Activated CD4-positive, alpha-beta memory T cell treated with anti-CD3 and anti-CD28 coated beads, Interleukin-2, amount 10 ng/mL, durations not matched to agents 7 days and 5 days (primary cell): ENCODE measurements at regions of chr2 and their contacts with region 1.

Region 1: GRCh38 chr2:70142590-70143313 is 48.1 kb downstream of the C2orf42 start:
- DNase-seq: peak; percentile 100
- H3K4me3 Mint-ChIP-seq: peak overlapping the region; percentile 80
- H3K27ac Mint-ChIP-seq: peak overlapping the region; percentile 97
- H3K4me1 Mint-ChIP-seq: peaks cover 71% of the 10 kb centered on the region
- H3K27me3 Mint-ChIP-seq: no peaks in the 10 kb centered on the region

Region 2: GRCh38 chr2:69893684-69894551 is 248.8 kb before region 1 on chr2 and contains the start of gene SNRNP27:
- CTCF ChIA-PET with region 1: no interaction called
- POLR2A ChIA-PET with region 1: interaction called, 15 read pairs
- DNase-seq: peak; percentile 84
- H3K4me3 Mint-ChIP-seq: peak within 1 kb of the TSS; percentile 96
- H3K27ac Mint-ChIP-seq: peak within 1 kb of the TSS; percentile 94
- H3K4me1 Mint-ChIP-seq: peaks cover 44% of the 10 kb centered on the region
- H3K27me3 Mint-ChIP-seq: no peaks in the 10 kb centered on the region
- total RNA-seq, gene SNRNP27: 59.3 to 63.3 TPM

Region 3: DNA sequence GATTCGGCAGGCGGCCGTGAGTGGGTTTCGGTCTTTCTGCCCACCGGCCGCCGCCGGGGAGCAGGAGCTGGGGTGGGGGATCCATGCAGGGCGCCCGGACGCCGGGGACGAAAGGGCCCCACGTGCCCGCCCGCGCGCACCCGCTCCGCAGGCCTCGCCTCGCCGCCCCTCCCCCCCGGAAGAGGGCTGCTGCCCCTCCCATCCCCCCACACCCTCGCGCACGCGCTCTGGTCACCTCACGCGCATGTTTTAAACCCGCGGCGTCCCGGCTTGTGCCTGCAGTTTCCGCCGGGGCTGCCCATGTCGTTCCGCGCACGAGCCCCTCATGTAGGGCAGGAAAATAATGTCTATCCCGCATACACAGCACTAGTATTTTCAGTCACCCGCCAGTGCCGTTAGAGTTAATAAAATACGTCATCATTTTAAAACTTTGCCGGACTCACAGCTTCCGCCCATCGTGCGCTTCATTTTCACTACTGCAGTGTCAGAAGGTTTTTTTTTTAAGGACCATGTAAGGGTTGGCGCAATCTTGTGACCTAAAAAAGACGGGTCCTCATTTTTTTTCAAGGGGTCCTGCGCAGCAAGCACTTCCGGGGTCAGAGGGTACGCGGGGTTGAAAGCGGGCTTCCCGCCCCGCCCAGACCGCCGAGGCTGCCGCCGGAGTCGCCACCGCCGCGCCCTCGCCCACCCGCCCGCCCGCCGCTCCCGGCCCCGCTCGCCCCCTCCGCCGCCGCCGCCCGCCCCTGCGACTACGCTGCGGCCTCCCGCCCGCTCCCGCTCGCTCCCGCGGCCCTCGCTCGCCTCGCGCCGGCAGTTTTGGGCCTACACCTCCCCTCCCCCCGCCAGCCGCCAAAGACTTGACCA is 55.7 kb before region 1 on chr2 and contains the start of gene PCBP1:
- CTCF ChIA-PET with region 1: interaction called, 147 read pairs
- POLR2A ChIA-PET with region 1: interaction called, 856 read pairs
- DNase-seq: peak; percentile 95
- H3K4me3 Mint-ChIP-seq: peak within 1 kb of the TSS; percentile 98
- H3K27ac Mint-ChIP-seq: peak within 1 kb of the TSS; percentile 100
- H3K4me1 Mint-ChIP-seq: peaks cover 59% of the 10 kb centered on the region
- H3K27me3 Mint-ChIP-seq: no peaks in the 10 kb centered on the region
- total RNA-seq, gene PCBP1: 475 to 483 TPM

Region 4: GRCh38 chr2:70124983-70125480 is 17.7 kb before region 1 on chr2:
- CTCF ChIA-PET with region 1: interaction called, 70 read pairs
- POLR2A ChIA-PET with region 1: interaction called, 197 read pairs
- DNase-seq: peak; percentile 65
- H3K4me3 Mint-ChIP-seq: peak overlapping the region; percentile 84
- H3K27ac Mint-ChIP-seq: peak overlapping the region; percentile 99
- H3K4me1 Mint-ChIP-seq: peaks cover 71% of the 10 kb centered on the region
- H3K27me3 Mint-ChIP-seq: no peaks in the 10 kb centered on the region

Region 5: GRCh38 chr2:70190418-70191243 is 47.9 kb after region 1 on chr2 and contains the start of gene C2orf42:
- CTCF ChIA-PET with region 1: interaction called, 8 read pairs
- POLR2A ChIA-PET with region 1: interaction called, 60 read pairs
- DNase-seq: peak; percentile 96
- H3K4me3 Mint-ChIP-seq: peak within 1 kb of the TSS; percentile 82
- H3K27ac Mint-ChIP-seq: peak within 1 kb of the TSS; percentile 87
- H3K4me1 Mint-ChIP-seq: peaks cover 23% of the 10 kb centered on the region
- H3K27me3 Mint-ChIP-seq: no peaks in the 10 kb centered on the region
- total RNA-seq, gene C2orf42: 28.8 to 32.2 TPM